CD8-positive, alpha-beta T cell (primary cell): ENCODE measurements at regions of chr20 and their contacts with region 1.

Region 1: GRCh38 chr20:34825530-34826362 is at the start of gene NCOA6:
- DNase-seq: peak; percentile 76 to 92 (median 85)
- ATAC-seq: peak; percentile 71
- H3K4me3 ChIP-seq: peak within 1 kb of the TSS; percentile 87 to 89
- H3K4me3 Mint-ChIP-seq: peak within 1 kb of the TSS; percentile 98
- H3K27ac ChIP-seq: peak within 1 kb of the TSS; percentile 38 to 67
- H3K27ac Mint-ChIP-seq: peak within 1 kb of the TSS; percentile 97
- H3K4me1 ChIP-seq: peaks cover 21% of the 10 kb centered on the region
- H3K4me1 Mint-ChIP-seq: peaks cover 41% of the 10 kb centered on the region
- H3K27me3 ChIP-seq: no peaks in the 10 kb centered on the region
- H3K27me3 Mint-ChIP-seq: peaks cover 2% of the 10 kb centered on the region
- CTCF ChIP-seq: no peak
- total RNA-seq, gene NCOA6: 13.0 to 13.5 TPM

Region 2: DNA sequence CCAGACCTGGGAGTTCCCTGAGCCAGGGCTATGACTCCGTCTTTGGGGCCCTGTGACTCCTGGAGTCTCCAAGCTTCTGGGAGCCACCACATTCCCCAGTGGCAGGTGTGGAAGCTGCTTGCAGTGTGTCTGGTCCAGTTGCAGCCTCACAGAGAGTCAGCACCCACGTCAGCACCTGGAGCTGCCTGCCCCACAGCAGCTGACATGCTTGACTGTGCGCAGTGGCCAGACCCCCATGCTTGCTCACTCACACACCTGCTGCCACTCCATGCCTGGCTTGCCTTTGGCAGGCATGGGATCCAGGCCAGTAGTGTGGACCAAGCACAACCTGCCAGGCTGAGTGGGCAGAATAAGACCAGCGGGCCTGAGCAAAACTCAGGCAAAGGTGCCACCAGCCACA is 615.5 kb before region 1 on chr20:
- CTCF ChIA-PET with region 1: no interaction called
- POLR2A ChIA-PET with region 1: no interaction called
- intact Hi-C with region 1: no loop called
- DNase-seq: no peak
- ATAC-seq: no peak
- H3K4me3 ChIP-seq: no peak overlapping the region
- H3K4me3 Mint-ChIP-seq: no peak overlapping the region
- H3K27ac ChIP-seq: no peak overlapping the region
- H3K27ac Mint-ChIP-seq: no peak overlapping the region
- H3K4me1 ChIP-seq: no peaks in the 10 kb centered on the region
- H3K4me1 Mint-ChIP-seq: no peaks in the 10 kb centered on the region
- H3K27me3 ChIP-seq: no peaks in the 10 kb centered on the region
- H3K27me3 Mint-ChIP-seq: peaks cover 16% of the 10 kb centered on the region
- CTCF ChIP-seq: no peak

Region 3: DNA sequence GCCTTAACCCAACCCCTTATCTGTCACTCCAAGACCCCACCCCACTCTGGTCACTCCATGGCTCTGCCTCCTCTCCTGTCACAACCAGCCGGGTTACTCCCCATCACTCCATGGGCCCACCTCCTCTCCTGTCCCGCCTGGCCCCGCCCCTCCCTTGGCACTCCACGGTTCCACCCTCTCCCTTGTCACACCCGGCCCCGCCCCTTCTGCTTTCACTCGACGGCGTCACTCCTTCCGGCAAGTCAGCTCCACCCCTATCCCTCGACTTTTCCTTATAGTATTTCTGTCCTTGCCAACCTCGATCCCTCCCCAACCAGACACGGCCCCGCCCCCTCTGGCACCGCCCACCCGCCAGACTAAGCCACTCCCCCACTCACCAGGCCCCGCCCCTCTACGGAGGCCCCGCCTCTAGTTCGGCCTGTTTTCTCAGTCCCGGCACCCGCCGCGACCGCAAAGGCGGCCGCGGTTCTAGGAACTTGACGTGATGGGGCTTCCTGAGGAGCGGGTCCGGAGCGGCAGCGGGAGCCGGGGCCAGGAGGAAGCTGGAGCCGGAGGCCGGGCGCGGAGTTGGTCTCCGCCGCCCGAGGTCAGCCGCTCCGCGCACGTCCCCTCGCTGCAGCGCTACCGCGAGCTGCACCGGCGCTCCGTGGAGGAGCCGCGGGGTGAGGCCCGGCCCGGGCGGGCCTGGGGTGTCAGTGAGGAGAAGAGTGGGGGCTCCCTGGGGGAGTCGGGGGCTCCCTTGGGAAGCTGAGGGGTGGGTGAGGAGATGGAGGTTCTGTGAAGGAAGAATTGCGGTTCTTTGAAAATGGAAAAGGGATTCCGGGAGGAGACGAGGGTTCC is 50.6 kb after region 1 on chr20 and contains the start of gene ACSS2:
- CTCF ChIA-PET with region 1: no interaction called
- POLR2A ChIA-PET with region 1: no interaction called
- intact Hi-C with region 1: loop called (anchors 1 kb)
- DNase-seq: peak; percentile 85 to 97 (median 91)
- ATAC-seq: peak; percentile 85
- H3K4me3 ChIP-seq: peak within 1 kb of the TSS; percentile 55 to 68
- H3K4me3 Mint-ChIP-seq: peak within 1 kb of the TSS; percentile 89
- H3K27ac ChIP-seq: peak within 1 kb of the TSS in 1 of 2 experiments; percentile 24
- H3K27ac Mint-ChIP-seq: peak within 1 kb of the TSS; percentile 57
- H3K4me1 ChIP-seq: peaks cover 46% of the 10 kb centered on the region
- H3K4me1 Mint-ChIP-seq: peaks cover 54% of the 10 kb centered on the region
- H3K27me3 ChIP-seq: no peaks in the 10 kb centered on the region
- H3K27me3 Mint-ChIP-seq: no peaks in the 10 kb centered on the region
- CTCF ChIP-seq: no peak
- total RNA-seq, gene ACSS2: 6.5 to 12.7 TPM